OCI-LY7 (cell line): ENCODE measurements at regions of chr7 and their contacts with region 1.

Region 1: GRCh38 chr7:69757981-69758430 is 159.7 kb downstream of the AUTS2 start:
- DNase-seq: no peak
- H3K4me3 ChIP-seq: no peak overlapping the region
- H3K27ac ChIP-seq: no peak overlapping the region
- H3K4me1 ChIP-seq: peaks cover 72% of the 10 kb centered on the region
- CTCF ChIP-seq: no peak

Region 2: GRCh38 chr7:69403169-69403568 is 354.8 kb before region 1 on chr7:
- CTCF ChIA-PET with region 1: no interaction called
- POLR2A ChIA-PET with region 1: no interaction called
- intact Hi-C with region 1: loop called (anchors 2 kb)
- DNase-seq: peak; percentile 73
- H3K4me3 ChIP-seq: no peak overlapping the region
- H3K27ac ChIP-seq: no peak overlapping the region
- H3K4me1 ChIP-seq: no peaks in the 10 kb centered on the region
- CTCF ChIP-seq: peak; percentile 82